Lower lobe of right lung (tissue), 2 donors: ENCODE measurements at regions of chr19 and their contacts with region 1.

Region 1: GRCh38 chr19:19489804-19490655 is 25.3 kb downstream of the TSSK6 start:
- DNase-seq: peak; percentile 70
- ATAC-seq: peak; percentile 69 to 74
- H3K4me3 ChIP-seq: peak overlapping the region; percentile 17
- H3K27ac ChIP-seq: peak overlapping the region; percentile 86
- H3K4me1 ChIP-seq: peaks cover 55% of the 10 kb centered on the region
- H3K27me3 ChIP-seq: no peaks in the 10 kb centered on the region
- CTCF ChIP-seq: peak; percentile 87

Region 2: GRCh38 chr19:19361075-19361594 is 128.9 kb before region 1 on chr19:
- intact Hi-C with region 1: loop called (anchors 10 kb)
- DNase-seq: peak; percentile 72
- ATAC-seq: peak; percentile 80 to 82
- H3K4me3 ChIP-seq: no peak overlapping the region
- H3K27ac ChIP-seq: no peak overlapping the region
- H3K4me1 ChIP-seq: peaks cover 25% of the 10 kb centered on the region
- H3K27me3 ChIP-seq: no peaks in the 10 kb centered on the region
- CTCF ChIP-seq: peak; percentile 87